GM12878 (cell line): ENCODE measurements at regions of chr15 and their contacts with region 1.

Region 1: GRCh38 chr15:65638681-65639089 is 16.9 kb downstream of the SLC24A1 start:
- DNase-seq: peak; percentile 28
- ATAC-seq: peak; percentile 77
- H3K4me3 ChIP-seq: no peak overlapping the region
- H3K27ac ChIP-seq: no peak overlapping the region
- H3K4me1 ChIP-seq: no peaks in the 10 kb centered on the region
- H3K27me3 ChIP-seq: no peaks in the 10 kb centered on the region
- CTCF ChIP-seq: peak; percentile 78 to 89 (median 88)
- EP300 ChIP-seq: no peak
- POLR2A ChIP-seq: no peak
- RAD21 ChIP-seq: peak; percentile 94

Region 2: DNA sequence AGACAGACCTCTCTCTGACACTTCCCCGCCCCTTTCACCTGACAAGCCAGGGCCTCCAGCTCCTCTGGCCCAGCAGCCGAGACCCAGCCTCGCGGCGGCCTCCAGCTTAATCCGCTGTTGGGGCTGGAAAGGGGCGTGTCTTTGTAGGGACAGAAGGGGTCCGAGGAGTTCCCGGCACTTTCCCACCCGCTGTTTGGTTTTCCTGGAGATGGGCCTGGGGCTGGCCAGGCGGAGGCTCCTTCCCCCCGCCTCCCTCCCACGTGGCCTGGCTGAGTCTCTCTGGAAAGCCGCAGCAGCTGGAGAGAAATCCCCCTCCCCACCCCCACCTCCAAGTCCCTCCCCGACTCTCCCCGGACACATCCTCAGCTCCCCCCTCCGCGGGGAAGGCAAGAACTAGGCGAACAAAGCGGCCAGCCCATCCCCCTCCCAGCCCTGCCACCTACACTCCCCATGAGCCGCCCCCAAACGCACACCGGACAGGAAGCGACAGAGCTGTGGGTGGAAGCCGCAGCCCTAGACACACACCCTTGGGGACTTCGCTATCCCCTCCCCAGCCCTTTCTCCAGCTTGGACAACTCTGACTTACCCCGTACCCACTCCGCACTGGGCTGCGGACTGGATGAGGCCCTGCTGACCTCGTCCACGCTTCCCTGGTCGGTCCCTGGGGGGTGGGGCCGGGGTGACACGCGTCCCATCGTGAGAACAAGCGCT is 217.2 kb before region 1 on chr15:
- CTCF ChIA-PET with region 1: no interaction called
- POLR2A ChIA-PET with region 1: no interaction called
- RAD21 ChIA-PET with region 1: no interaction called
- SMC1A ChIA-PET with region 1: no interaction called
- in situ Hi-C with region 1: no loop called
- intact Hi-C with region 1: no loop called
- DNase-seq: no peak
- ATAC-seq: peak; percentile 86
- H3K4me3 ChIP-seq: peak overlapping the region; percentile 58; the same call in 1 of the 2 replicates
- H3K27ac ChIP-seq: peak overlapping the region; percentile 18; the same call in 1 of the 2 replicates
- H3K4me1 ChIP-seq: peaks cover 7% of the 10 kb centered on the region
- H3K27me3 ChIP-seq: peaks cover 2 to 11% of the 10 kb centered on the region in 2 experiments
- CTCF ChIP-seq: no peak
- EP300 ChIP-seq: peak; percentile 19 to 30; a peak in 2 of 4 replicates
- POLR2A ChIP-seq: 0 out of 2 replicates have a peak, but pooled peaks have one; percentile 26
- RAD21 ChIP-seq: no peak

Region 3: GRCh38 chr15:65610871-65611718 is 27.6 kb before region 1 on chr15 and contains the start of gene INTS14:
- CTCF ChIA-PET with region 1: interaction called, 15 read pairs
- POLR2A ChIA-PET with region 1: no interaction called
- RAD21 ChIA-PET with region 1: interaction called, 12 read pairs
- SMC1A ChIA-PET with region 1: interaction called, 11 read pairs
- in situ Hi-C with region 1: no loop called
- intact Hi-C with region 1: no loop called
- DNase-seq: peak; percentile 67
- ATAC-seq: peak; percentile 99
- H3K4me3 ChIP-seq: peak within 1 kb of the TSS; percentile 88
- H3K27ac ChIP-seq: peak within 1 kb of the TSS; percentile 76
- H3K4me1 ChIP-seq: peaks cover 7% of the 10 kb centered on the region
- H3K27me3 ChIP-seq: no peaks in the 10 kb centered on the region
- CTCF ChIP-seq: peak; percentile 63 to 92 (median 67)
- EP300 ChIP-seq: peak in 1 of 2 experiments; percentile 27; a peak in 1 of 4 replicates
- POLR2A ChIP-seq: peak; percentile 88
- RAD21 ChIP-seq: peak; percentile 41; the same call in 1 of the 2 replicates
- polyA plus RNA-seq, gene INTS14: 39.4 to 41.9 TPM

Region 4: GRCh38 chr15:65688462-65688861 is 49.8 kb after region 1 on chr15:
- CTCF ChIA-PET with region 1: interaction called, 11 read pairs
- POLR2A ChIA-PET with region 1: no interaction called
- RAD21 ChIA-PET with region 1: no interaction called
- SMC1A ChIA-PET with region 1: interaction called, 5 read pairs
- in situ Hi-C with region 1: no loop called
- intact Hi-C with region 1: no loop called
- DNase-seq: peak; percentile 32
- ATAC-seq: peak; percentile 76
- H3K4me3 ChIP-seq: no peak overlapping the region
- H3K27ac ChIP-seq: peak overlapping the region; percentile 18; the same call in 1 of the 2 replicates
- H3K4me1 ChIP-seq: peaks cover 19% of the 10 kb centered on the region
- H3K27me3 ChIP-seq: no peaks in the 10 kb centered on the region
- CTCF ChIP-seq: no peak
- EP300 ChIP-seq: no peak
- POLR2A ChIP-seq: no peak
- RAD21 ChIP-seq: no peak

Region 5: GRCh38 chr15:65824031-65824743 is 185.5 kb after region 1 on chr15:
- CTCF ChIA-PET with region 1: interaction called, 23 read pairs
- POLR2A ChIA-PET with region 1: no interaction called
- RAD21 ChIA-PET with region 1: interaction called, 5 read pairs
- SMC1A ChIA-PET with region 1: interaction called, 9 read pairs
- in situ Hi-C with region 1: no loop called
- intact Hi-C with region 1: no loop called
- DNase-seq: no peak
- ATAC-seq: peak; percentile 75
- H3K4me3 ChIP-seq: no peak overlapping the region
- H3K27ac ChIP-seq: peak overlapping the region; percentile 1; the same call in 1 of the 2 replicates
- H3K4me1 ChIP-seq: peaks cover 50% of the 10 kb centered on the region
- H3K27me3 ChIP-seq: no peaks in the 10 kb centered on the region
- CTCF ChIP-seq: peak; percentile 63 to 74 (median 73)
- EP300 ChIP-seq: no peak
- POLR2A ChIP-seq: no peak
- RAD21 ChIP-seq: peak; percentile 68

Region 6: GRCh38 chr15:65862682-65863081 is 224.0 kb after region 1 on chr15:
- CTCF ChIA-PET with region 1: interaction called, 25 read pairs
- POLR2A ChIA-PET with region 1: no interaction called
- RAD21 ChIA-PET with region 1: interaction called, 5 read pairs
- SMC1A ChIA-PET with region 1: interaction called, 3 read pairs
- in situ Hi-C with region 1: loop called (anchors 5 kb)
- intact Hi-C with region 1: loop called (anchors 5 kb)
- DNase-seq: no peak
- ATAC-seq: peak; percentile 97
- H3K4me3 ChIP-seq: no peak overlapping the region
- H3K27ac ChIP-seq: no peak overlapping the region
- H3K4me1 ChIP-seq: peaks cover 13% of the 10 kb centered on the region
- H3K27me3 ChIP-seq: no peaks in the 10 kb centered on the region
- CTCF ChIP-seq: peak; percentile 38 to 64 (median 54); a peak in 5 of 6 replicates
- EP300 ChIP-seq: no peak
- POLR2A ChIP-seq: no peak
- RAD21 ChIP-seq: peak; percentile 54

Region 7: DNA sequence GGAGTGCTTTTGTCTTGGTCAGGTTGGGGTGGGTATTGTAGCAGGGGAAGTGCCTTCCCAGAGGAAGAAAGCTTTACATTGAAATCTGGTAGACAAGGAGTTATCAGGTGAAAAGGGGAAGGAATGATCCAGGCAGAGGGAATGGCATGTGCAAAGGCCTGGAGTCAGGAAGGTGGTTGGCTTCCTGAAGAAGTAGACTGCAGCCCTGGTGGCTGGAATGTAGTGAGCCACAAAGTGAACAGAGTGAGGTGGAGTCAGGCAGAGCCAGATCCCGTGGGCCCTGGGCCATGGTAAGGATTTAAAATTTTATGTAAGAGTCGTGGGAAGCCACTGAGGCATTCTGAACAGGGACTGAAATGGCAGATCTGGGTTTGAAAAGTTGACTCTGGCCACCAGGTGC is 288.9 kb after region 1 on chr15:
- CTCF ChIA-PET with region 1: no interaction called
- POLR2A ChIA-PET with region 1: no interaction called
- RAD21 ChIA-PET with region 1: no interaction called
- SMC1A ChIA-PET with region 1: no interaction called
- in situ Hi-C with region 1: no loop called
- intact Hi-C with region 1: no loop called
- DNase-seq: no peak
- ATAC-seq: no peak
- H3K4me3 ChIP-seq: no peak overlapping the region
- H3K27ac ChIP-seq: no peak overlapping the region
- H3K4me1 ChIP-seq: no peaks in the 10 kb centered on the region
- H3K27me3 ChIP-seq: no peaks in the 10 kb centered on the region
- CTCF ChIP-seq: no peak
- EP300 ChIP-seq: no peak
- POLR2A ChIP-seq: no peak
- RAD21 ChIP-seq: no peak

Region 8: DNA sequence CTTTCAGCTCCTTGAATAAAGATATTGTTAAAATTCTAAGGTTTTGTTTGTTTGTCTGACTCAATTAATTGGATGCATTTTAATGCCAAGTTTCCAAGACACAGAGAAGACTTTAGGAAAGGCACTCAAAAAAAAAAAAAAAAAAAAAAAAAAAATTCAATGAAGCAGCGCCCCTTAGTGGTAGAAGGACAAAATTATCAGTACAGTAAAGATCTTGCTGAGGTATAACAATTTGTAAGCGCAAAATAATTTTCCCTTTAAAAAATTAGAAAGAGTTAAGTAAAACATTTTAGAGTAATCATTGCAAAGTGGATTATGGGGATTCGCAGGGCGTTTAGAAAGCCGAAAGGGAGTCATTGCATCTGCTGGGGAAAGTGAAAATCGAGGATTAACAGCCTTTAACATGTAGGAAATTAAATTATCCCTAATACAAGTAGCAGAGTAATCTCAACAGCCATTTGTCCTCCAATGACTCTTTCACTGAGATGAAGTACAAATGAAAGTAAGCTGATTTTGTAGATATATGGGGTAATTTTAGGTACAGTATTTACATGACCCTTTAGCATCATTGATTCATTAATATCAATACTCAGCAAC is 648.9 kb after region 1 on chr15:
- CTCF ChIA-PET with region 1: interaction called, 10 read pairs
- POLR2A ChIA-PET with region 1: no interaction called
- RAD21 ChIA-PET with region 1: interaction called, 3 read pairs
- SMC1A ChIA-PET with region 1: interaction called, 3 read pairs
- in situ Hi-C with region 1: no loop called
- intact Hi-C with region 1: loop called (anchors 5 kb)
- DNase-seq: no peak
- ATAC-seq: peak; percentile 34; the same call in 2 of the 3 replicates
- H3K4me3 ChIP-seq: no peak overlapping the region
- H3K27ac ChIP-seq: no peak overlapping the region
- H3K4me1 ChIP-seq: no peaks in the 10 kb centered on the region; the same call in 1 of the 2 replicates
- H3K27me3 ChIP-seq: no peaks in the 10 kb centered on the region
- CTCF ChIP-seq: peak; percentile 42 to 56 (median 51)
- EP300 ChIP-seq: no peak
- POLR2A ChIP-seq: no peak
- RAD21 ChIP-seq: peak; percentile 59